Activated naive CD4-positive, alpha-beta T cell treated with anti-CD3 and anti-CD28 coated beads for 36 hours (primary cell): ENCODE measurements at regions of chr15 and their contacts with region 1.

Region 1: GRCh38 chr15:99371180-99372103 is 120.2 kb downstream of the LRRC28 start:
- DNase-seq: no peak
- H3K4me3 Mint-ChIP-seq: no peak overlapping the region
- H3K27ac Mint-ChIP-seq: peak overlapping the region; percentile 44
- H3K4me1 Mint-ChIP-seq: peaks cover 22% of the 10 kb centered on the region
- H3K27me3 Mint-ChIP-seq: no peaks in the 10 kb centered on the region

Region 2: DNA sequence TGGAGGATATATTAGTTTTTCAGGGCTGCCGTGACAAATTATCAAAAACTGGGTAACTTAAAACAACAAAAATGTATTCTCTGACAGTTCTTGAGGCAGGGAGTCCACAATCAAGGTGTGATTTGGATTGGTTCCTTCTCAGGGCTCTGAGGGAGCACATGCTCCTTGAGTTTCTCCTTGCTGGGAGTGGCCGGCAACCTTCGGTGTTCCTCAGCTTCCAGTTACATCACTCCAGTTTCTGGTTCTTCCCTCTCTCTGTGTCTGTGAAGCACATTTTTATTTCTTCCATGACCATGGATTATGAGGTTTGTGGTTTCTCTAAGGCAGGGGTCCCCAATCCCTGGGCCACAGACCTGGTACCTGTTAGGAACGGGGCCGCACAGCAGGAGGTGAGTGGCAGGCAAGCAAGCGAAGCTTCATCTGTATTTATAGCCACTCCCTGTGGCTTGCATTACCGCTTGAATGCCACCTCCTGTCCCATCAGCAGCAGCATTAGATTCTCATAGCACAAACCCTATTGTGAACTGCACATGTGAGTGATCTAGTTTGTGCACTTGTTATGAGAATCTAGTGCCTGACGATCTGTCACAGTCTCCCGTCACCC is 95.8 kb before region 1 on chr15:
- CTCF ChIA-PET with region 1: interaction called, 15 read pairs
- intact Hi-C with region 1: loop called (anchors 1 kb)
- DNase-seq: no peak
- H3K4me3 Mint-ChIP-seq: no peak overlapping the region
- H3K27ac Mint-ChIP-seq: no peak overlapping the region
- H3K4me1 Mint-ChIP-seq: peaks cover 27% of the 10 kb centered on the region
- H3K27me3 Mint-ChIP-seq: no peaks in the 10 kb centered on the region

Region 3: DNA sequence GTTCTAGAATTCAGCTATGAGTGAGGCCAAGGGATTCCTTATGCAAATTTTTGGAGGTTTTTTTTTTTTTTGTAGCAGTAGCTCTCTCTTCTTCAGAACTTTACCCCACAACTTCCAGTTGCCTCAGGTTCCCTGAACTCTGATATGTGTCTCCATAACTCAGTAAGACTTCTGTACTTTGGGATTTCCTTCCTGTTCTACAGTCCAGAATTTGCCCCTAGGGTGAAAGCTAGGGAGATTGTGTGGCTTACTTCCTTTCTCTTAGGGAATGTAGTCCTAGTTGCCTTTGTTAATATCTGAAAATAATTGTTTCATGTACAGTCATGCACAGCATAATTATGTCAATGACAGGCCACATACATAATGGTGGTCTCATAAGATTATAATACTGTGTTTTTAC is 89.3 kb before region 1 on chr15:
- CTCF ChIA-PET with region 1: interaction called, 7 read pairs
- intact Hi-C with region 1: loop called (anchors 1 kb)
- DNase-seq: no peak
- H3K4me3 Mint-ChIP-seq: no peak overlapping the region
- H3K27ac Mint-ChIP-seq: no peak overlapping the region
- H3K4me1 Mint-ChIP-seq: peaks cover 43% of the 10 kb centered on the region
- H3K27me3 Mint-ChIP-seq: no peaks in the 10 kb centered on the region

Region 4: GRCh38 chr15:99343881-99344551 is 27.4 kb before region 1 on chr15:
- CTCF ChIA-PET with region 1: interaction called, 4 read pairs
- intact Hi-C with region 1: loop called (anchors 2 kb)
- DNase-seq: peak; percentile 43
- H3K4me3 Mint-ChIP-seq: no peak overlapping the region
- H3K27ac Mint-ChIP-seq: no peak overlapping the region
- H3K4me1 Mint-ChIP-seq: peaks cover 10% of the 10 kb centered on the region
- H3K27me3 Mint-ChIP-seq: no peaks in the 10 kb centered on the region